Cardiac septum (tissue), 1 donor: ENCODE measurements at regions of chr7 and their contacts with region 1.

Region 1: GRCh38 chr7:51123322-51124029 is 193.1 kb downstream of the COBL start:
- DNase-seq: no peak

Region 2: GRCh38 chr7:49883933-49884332 is 1239.5 kb before region 1 on chr7:
- intact Hi-C with region 1: loop called (anchors 5 kb)
- DNase-seq: no peak

Region 3: GRCh38 chr7:50953820-50954219 is 169.7 kb before region 1 on chr7:
- intact Hi-C with region 1: loop called (anchors 5 kb)
- DNase-seq: no peak

Region 4: DNA sequence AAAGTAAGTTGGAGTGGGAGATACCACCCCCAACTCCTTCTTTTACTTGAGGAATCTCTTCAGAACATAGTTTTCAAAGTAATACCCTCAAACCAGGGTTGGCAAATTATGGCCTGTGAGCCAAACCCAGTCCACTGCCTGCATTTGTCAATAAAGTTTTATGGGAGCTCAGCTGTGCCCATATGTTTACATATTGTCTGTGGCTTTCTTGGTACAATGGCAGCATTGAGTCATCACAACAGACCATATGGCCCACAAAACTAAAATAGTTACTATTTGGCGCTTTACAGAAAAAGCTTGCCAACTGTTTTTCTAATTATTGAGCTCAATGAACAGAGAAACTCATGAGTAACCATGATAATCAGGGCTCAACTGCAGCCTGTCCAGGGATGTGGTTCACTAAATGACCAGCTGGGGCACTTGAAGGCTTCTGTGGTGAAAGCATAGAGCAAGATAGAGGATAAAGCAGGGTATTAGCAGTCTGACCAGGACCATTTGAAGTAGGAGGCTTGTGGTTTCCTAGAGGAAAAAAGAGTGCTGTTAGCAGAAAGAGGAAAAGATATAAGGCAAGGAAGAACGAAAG is 144.8 kb before region 1 on chr7:
- intact Hi-C with region 1: no loop called
- DNase-seq: no peak

Region 5: GRCh38 chr7:51075681-51076580 is 47.5 kb before region 1 on chr7:
- intact Hi-C with region 1: loop called (anchors 5 kb)
- DNase-seq: no peak

Region 6: DNA sequence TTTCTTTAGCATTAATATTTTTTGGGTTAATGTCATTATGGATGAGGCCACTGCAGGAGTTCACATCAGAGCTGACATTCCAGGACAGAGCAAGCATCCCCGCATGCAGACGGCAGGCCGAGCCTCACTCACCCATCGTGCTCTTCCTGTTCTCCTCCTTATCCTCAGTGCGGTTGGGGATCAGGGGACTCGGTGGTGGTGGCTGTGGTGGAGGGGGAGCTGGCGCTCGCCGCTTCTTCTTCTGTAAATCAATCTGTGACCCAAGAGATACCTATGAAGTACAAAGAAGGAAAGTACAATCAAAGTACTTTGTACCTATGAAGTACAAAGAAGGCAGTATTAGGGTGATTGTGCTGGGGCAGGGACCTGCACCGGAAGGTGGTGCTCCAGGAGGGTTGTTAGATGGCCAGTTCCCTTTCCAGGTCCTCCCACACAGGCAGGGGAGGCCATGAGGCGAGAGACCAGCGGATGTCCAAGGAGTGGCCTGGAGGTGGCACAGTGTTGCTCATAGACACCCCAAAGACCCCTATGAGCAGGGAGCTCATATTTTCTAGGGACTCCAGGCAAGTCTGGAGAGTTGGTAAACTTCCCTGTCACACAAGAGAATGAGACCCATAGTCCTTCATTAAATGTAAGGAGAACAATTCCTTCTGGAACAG is 38.3 kb before region 1 on chr7:
- intact Hi-C with region 1: loop called (anchors 5 kb)
- DNase-seq: no peak

Region 7: DNA sequence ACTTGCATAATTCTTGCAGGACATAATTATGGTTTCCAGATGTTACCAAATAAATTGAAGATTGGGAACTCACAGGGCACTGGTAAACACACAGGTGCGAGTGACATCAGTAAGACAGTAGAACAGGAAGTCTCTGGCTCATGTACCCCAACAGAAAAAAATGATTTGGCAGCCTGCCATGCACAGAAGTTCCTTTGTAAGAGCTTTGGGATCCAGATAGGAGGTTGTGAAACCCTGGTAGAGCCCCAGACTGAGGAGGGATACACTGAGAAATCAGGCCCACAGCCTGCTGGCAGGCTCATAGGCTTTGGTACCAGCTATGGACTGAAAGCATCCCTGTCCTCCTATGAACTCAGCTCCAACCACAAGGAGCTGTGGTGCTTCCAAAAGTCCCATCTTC is 75.2 kb after region 1 on chr7:
- intact Hi-C with region 1: no loop called
- DNase-seq: no peak

Region 8: DNA sequence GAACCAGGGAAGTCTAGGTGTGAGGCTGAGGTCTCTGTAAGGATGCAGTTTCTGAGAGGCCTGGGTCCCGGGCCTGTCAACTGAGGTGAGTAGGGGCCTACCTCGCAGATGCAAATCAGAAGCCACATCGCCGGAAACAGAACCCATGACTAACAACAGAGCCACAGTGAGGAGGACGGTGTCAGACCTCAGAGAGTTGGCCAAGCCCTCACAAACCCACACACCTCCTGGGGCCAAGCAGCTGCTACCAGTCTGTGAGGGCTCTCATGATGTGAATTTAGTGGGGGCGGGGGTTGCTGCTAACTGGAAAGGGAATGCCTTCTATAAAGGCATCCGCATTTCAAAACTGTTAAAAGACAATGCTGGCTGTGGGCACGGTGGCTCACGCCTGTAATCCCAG is 90.1 kb after region 1 on chr7:
- intact Hi-C with region 1: no loop called
- DNase-seq: no peak